ENCODE measurements at regions of chr9 and their contacts with region 1.

Region 1: DNA sequence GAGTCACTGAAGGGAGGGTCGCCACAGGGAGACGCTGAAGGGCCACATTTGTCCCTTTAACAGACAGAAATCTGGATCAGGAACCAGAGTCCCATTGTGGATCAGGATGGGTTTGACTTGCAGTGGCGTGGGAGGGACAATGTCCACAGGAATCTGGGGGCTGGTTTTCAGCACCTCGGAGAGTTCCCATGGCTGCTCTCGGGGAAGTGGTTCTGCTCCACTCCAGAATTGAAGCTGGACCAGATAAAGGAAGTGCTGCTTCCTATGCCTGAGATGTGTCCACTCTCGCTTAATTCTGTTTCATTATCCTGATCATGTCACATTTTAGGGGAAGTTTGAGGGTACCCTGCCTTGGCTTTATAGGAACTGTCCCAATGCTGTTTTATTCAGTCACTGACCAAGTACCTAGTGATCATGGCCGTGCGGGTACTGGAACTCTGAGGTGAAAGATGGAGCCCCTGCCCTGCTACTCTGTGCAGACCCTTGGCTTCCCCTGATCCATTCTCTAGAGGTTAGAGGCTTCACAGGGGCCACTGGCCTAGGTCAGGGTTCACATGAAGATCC is 28.7 kb downstream of the ENHO start:
- DNase-seq: peak; percentile 47 to 58 (median 54)
- ATAC-seq: peak; percentile 66; the same call in 2 of the 3 replicates
- H3K4me3 ChIP-seq: no peak overlapping the region
- H3K27ac ChIP-seq: no peak overlapping the region
- H3K4me1 ChIP-seq: no peaks in the 10 kb centered on the region
- H3K27me3 ChIP-seq: no peaks in the 10 kb centered on the region
- CTCF ChIP-seq: no peak
- EP300 ChIP-seq: no peak
- POLR2A ChIP-seq: no peak
- RAD21 ChIP-seq: no peak

Region 2: GRCh38 chr9:33776578-33776977 is 717.5 kb before region 1 on chr9:
- CTCF ChIA-PET with region 1: no interaction called
- POLR2A ChIA-PET with region 1: no interaction called
- in situ Hi-C with region 1: no loop called
- intact Hi-C with region 1: no loop called
- DNase-seq: no peak
- ATAC-seq: no peak
- H3K4me3 ChIP-seq: no peak overlapping the region; the same call in 1 of the 2 replicates
- H3K27ac ChIP-seq: no peak overlapping the region
- H3K4me1 ChIP-seq: no peaks in the 10 kb centered on the region; a peak in 1 of 5 replicates
- H3K27me3 ChIP-seq: no peaks in the 10 kb centered on the region
- CTCF ChIP-seq: no peak
- EP300 ChIP-seq: no peak
- POLR2A ChIP-seq: no peak
- RAD21 ChIP-seq: no peak

Region 3: DNA sequence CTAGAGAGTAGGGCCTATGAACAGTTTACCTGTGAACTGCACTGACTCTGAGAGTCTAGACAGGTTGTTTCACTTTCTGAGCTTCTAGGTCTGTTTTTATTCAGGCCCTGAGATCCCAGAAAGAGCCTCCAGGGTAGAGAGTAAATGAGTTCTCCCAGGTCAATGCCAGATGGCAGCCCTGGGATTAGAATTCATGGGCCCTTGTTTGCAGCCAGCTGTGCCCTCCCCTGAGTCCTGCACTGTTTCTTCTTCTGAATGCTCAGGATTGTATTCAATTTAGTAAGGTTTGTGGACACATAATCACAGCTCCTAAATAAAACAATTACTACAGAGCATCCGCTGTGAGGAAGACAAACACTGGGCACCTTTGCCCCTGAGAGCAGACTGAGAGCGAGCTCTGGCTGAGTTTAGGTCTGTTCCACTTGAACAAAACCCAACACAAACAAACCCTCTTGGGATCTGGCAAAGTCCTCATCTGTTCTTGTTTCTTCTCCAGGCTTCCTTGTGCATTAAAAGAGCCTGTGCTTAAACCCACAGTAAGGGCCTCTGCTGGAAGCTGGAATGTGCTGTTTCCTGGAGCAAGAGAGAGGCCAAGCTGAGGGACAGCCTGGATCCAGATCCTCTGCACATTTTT is 65.6 kb before region 1 on chr9:
- CTCF ChIA-PET with region 1: no interaction called
- POLR2A ChIA-PET with region 1: interaction called, 3 read pairs
- in situ Hi-C with region 1: loop called (anchors 10 kb)
- intact Hi-C with region 1: no loop called
- DNase-seq: no peak
- ATAC-seq: no peak
- H3K4me3 ChIP-seq: no peak overlapping the region
- H3K27ac ChIP-seq: no peak overlapping the region
- H3K4me1 ChIP-seq: peaks cover 0 to 2% of the 10 kb centered on the region in 2 experiments; a peak in 3 of 5 replicates
- H3K27me3 ChIP-seq: no peaks in the 10 kb centered on the region
- CTCF ChIP-seq: no peak
- EP300 ChIP-seq: no peak
- POLR2A ChIP-seq: no peak
- RAD21 ChIP-seq: no peak

Region 4: GRCh38 chr9:34446468-34446891 is 47.6 kb before region 1 on chr9:
- CTCF ChIA-PET with region 1: no interaction called
- POLR2A ChIA-PET with region 1: interaction called, 3 read pairs
- in situ Hi-C with region 1: loop called (anchors 5 kb)
- intact Hi-C with region 1: no loop called
- DNase-seq: no peak
- ATAC-seq: no peak
- H3K4me3 ChIP-seq: no peak overlapping the region
- H3K27ac ChIP-seq: no peak overlapping the region
- H3K4me1 ChIP-seq: peaks cover 5 to 7% of the 10 kb centered on the region in 2 experiments; a peak in 3 of 5 replicates
- H3K27me3 ChIP-seq: no peaks in the 10 kb centered on the region
- CTCF ChIP-seq: no peak
- EP300 ChIP-seq: no peak
- POLR2A ChIP-seq: no peak
- RAD21 ChIP-seq: no peak